A549 (cell line): ENCODE measurements at regions of chr1 and their contacts with region 1.

Region 1: GRCh38 chr1:62144238-62144831 is 50.3 kb upstream of the L1TD1 start:
- DNase-seq: peak; percentile 40 to 41
- ATAC-seq: peak; percentile 59; a peak in 3 of 6 replicates
- H3K4me3 ChIP-seq: no peak overlapping the region
- H3K27ac ChIP-seq: no peak overlapping the region
- H3K4me1 ChIP-seq: no peaks in the 10 kb centered on the region
- CTCF ChIP-seq: peak; percentile 51
- EP300 ChIP-seq: no peak
- POLR2A ChIP-seq: no peak
- RAD21 ChIP-seq: peak; percentile 45 to 46; a peak in 4 of 5 replicates

Region 2: GRCh38 chr1:61138921-61139774 is 1005.2 kb before region 1 on chr1:
- CTCF ChIA-PET with region 1: no interaction called
- POLR2A ChIA-PET with region 1: no interaction called
- DNase-seq: peak; percentile 41 to 64
- ATAC-seq: peak; percentile 85 to 87
- H3K4me3 ChIP-seq: 0 out of 3 replicates have a peak overlapping the region, but pooled peaks have one; percentile 3
- H3K27ac ChIP-seq: peak overlapping the region; percentile 83 to 95
- H3K4me1 ChIP-seq: peaks cover 63% of the 10 kb centered on the region
- CTCF ChIP-seq: no peak
- EP300 ChIP-seq: 0 out of 5 replicates have a peak, but pooled peaks have one; percentile 26 to 41
- POLR2A ChIP-seq: no peak
- RAD21 ChIP-seq: no peak

Region 3: GRCh38 chr1:62131093-62131725 is 13.1 kb before region 1 on chr1:
- CTCF ChIA-PET with region 1: interaction called, 15 read pairs
- POLR2A ChIA-PET with region 1: no interaction called
- DNase-seq: peak; percentile 65 to 72
- ATAC-seq: peak; percentile 97 to 98
- H3K4me3 ChIP-seq: no peak overlapping the region
- H3K27ac ChIP-seq: no peak overlapping the region
- H3K4me1 ChIP-seq: no peaks in the 10 kb centered on the region
- CTCF ChIP-seq: peak; percentile 64
- EP300 ChIP-seq: no peak
- POLR2A ChIP-seq: no peak
- RAD21 ChIP-seq: peak; percentile 28 to 61; a peak in 4 of 5 replicates